H1 (cell line): ENCODE measurements at regions of chr10 and their contacts with region 1.

Region 1: DNA sequence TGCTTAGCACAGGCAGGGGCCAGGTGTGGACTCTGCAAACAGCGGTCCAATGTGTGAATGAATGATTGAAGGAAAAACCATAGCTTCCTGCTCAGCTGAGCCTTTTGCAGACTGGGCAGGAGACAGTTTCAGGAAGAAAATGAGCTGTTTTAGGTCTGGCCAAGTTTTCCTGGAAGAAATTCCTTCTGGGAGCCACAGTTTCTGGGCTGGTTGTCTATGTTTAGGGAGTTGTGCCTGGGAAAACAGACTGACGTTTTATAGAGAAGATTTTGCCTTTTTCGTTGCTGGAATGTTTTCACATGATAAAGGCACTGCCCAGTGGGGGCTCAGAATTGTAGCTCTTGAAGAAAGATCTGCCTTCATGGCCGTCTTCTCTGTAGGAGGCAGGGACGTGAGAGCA is 255.1 kb downstream of the CCSER2 start:
- DNase-seq: peak in 1 of 2 experiments; percentile 38
- H3K4me3 ChIP-seq: no peak overlapping the region
- H3K27ac ChIP-seq: no peak overlapping the region
- H3K4me1 ChIP-seq: peaks cover 0 to 14% (median 14%) of the 10 kb centered on the region in 4 experiments; a peak in 6 of 7 replicates
- H3K27me3 ChIP-seq: peaks cover 0 to 3% (median 0%) of the 10 kb centered on the region in 4 experiments; a peak in 1 of 7 replicates
- CTCF ChIP-seq: no peak
- EP300 ChIP-seq: no peak
- POLR2A ChIP-seq: no peak
- RAD21 ChIP-seq: no peak

Region 2: DNA sequence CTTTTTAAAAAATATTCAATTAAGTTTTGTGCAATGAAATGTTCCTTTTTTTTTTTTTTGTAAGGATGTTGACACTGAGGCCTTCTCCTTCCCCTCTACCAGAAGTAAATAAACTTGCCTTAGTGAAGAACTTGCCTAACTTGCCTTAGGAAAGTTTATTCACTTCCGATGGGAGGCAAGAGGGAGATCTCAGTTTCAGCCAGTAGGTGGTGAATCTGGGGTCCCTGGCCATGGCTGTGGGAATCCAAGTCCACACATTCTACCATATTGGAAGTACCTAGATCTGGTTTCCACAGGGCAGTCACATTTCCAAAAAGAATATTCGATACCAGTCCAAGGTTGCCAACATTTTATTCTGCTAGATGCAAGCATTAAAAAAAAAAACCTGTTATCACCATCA is 15.8 kb after region 1 on chr10:
- CTCF ChIA-PET with region 1: interaction called, 19 read pairs
- POLR2A ChIA-PET with region 1: no interaction called
- DNase-seq: no peak
- H3K4me3 ChIP-seq: no peak overlapping the region
- H3K27ac ChIP-seq: no peak overlapping the region
- H3K4me1 ChIP-seq: peaks cover 0 to 7% (median 4%) of the 10 kb centered on the region in 4 experiments; a peak in 4 of 7 replicates
- H3K27me3 ChIP-seq: peaks cover 7 to 25% (median 21%) of the 10 kb centered on the region in 4 experiments
- CTCF ChIP-seq: peak; percentile 44 to 51 (median 50)
- EP300 ChIP-seq: no peak
- POLR2A ChIP-seq: no peak
- RAD21 ChIP-seq: peak in 1 of 2 experiments; percentile 28; a peak in 2 of 4 replicates